Prostate gland (tissue), 2 donors: ENCODE measurements at regions of chr1 and their contacts with region 1.

Region 1: GRCh38 chr1:223123011-223123610 is 19.9 kb downstream of the TLR5 start:
- DNase-seq: no peak
- H3K4me3 ChIP-seq: no peak overlapping the region
- H3K27ac ChIP-seq: no peak overlapping the region
- H3K4me1 ChIP-seq: no peaks in the 10 kb centered on the region
- H3K27me3 ChIP-seq: no peaks in the 10 kb centered on the region
- CTCF ChIP-seq: no peak
- POLR2A ChIP-seq: no peak

Region 2: DNA sequence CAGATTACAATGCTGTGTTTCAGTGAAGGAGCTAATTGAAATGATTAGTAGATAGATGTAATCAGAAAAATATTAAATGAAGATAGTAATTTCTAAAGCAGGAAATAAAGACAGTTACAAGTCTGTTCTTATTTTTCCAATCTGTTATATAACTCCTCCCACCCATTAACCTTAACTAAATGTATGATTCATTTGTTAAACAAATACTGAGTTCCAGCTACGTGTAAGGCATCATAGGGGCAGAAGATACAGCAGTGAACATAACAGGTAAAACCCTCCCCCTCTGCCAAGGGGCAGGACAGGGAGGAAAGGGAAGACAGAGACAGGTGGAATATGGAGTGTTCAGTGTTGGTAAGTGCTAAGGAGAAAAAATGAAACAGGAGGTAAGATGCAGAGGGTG is 386.1 kb before region 1 on chr1 and contains the start of gene FAM177B:
- intact Hi-C with region 1: loop called (anchors 5 kb)
- DNase-seq: no peak
- H3K4me3 ChIP-seq: no peak within 1 kb of the TSS
- H3K27ac ChIP-seq: peak within 1 kb of the TSS in 1 of 2 donors; percentile 10
- H3K4me1 ChIP-seq: no peaks in the 10 kb centered on the region
- H3K27me3 ChIP-seq: no peaks in the 10 kb centered on the region
- CTCF ChIP-seq: no peak
- POLR2A ChIP-seq: no peak
- total RNA-seq, gene FAM177B: 0.23 to 0.51 TPM

Region 3: GRCh38 chr1:222792744-222793143 is 330.4 kb before region 1 on chr1:
- intact Hi-C with region 1: loop called (anchors 5 kb)
- DNase-seq: no peak
- H3K4me3 ChIP-seq: no peak overlapping the region
- H3K27ac ChIP-seq: no peak overlapping the region
- H3K4me1 ChIP-seq: no peaks in the 10 kb centered on the region
- H3K27me3 ChIP-seq: no peaks in the 10 kb centered on the region
- CTCF ChIP-seq: peak in 3 of 4 experiments; percentile 47 to 75 (median 64)
- POLR2A ChIP-seq: no peak

Region 4: GRCh38 chr1:222994506-222995235 is 128.4 kb before region 1 on chr1:
- intact Hi-C with region 1: no loop called
- DNase-seq: no peak
- H3K4me3 ChIP-seq: no peak overlapping the region
- H3K27ac ChIP-seq: no peak overlapping the region
- H3K4me1 ChIP-seq: no peaks in the 10 kb centered on the region
- H3K27me3 ChIP-seq: no peaks in the 10 kb centered on the region
- CTCF ChIP-seq: no peak
- POLR2A ChIP-seq: no peak

Region 5: GRCh38 chr1:223189903-223190724 is 67.0 kb after region 1 on chr1:
- intact Hi-C with region 1: no loop called
- DNase-seq: no peak
- H3K4me3 ChIP-seq: no peak overlapping the region
- H3K27ac ChIP-seq: no peak overlapping the region
- H3K4me1 ChIP-seq: no peaks in the 10 kb centered on the region
- H3K27me3 ChIP-seq: no peaks in the 10 kb centered on the region
- CTCF ChIP-seq: no peak
- POLR2A ChIP-seq: no peak